ENCODE measurements at regions of chr12 and their contacts with region 1.

Region 1: DNA sequence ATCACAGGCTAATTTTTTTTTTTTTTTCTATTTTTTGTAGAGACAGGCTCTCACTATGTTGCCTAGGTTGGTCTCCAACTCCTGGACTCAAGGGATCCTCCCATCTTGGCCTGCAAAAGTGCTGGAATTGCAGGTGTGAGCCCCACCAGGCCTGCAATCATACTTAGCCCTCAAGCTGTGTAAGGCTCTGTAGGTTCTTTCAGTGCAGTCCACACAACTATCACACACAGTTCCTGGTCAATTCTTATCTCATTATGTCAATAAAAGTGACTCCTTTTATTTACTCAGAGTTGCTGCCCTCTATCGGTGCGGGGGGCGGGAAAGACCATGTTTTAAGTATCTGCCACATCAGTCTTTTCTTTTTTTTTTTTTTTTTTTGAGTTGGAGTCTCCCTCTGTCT is 29.0 kb downstream of the SLC2A3 start:
- DNase-seq: peak; percentile 90 to 93
- ATAC-seq: peak; percentile 97 to 99
- H3K4me3 ChIP-seq: no peak overlapping the region
- H3K27ac ChIP-seq: peak overlapping the region; percentile 76 to 81
- H3K4me1 ChIP-seq: peaks cover 36% of the 10 kb centered on the region
- CTCF ChIP-seq: peak; percentile 53
- EP300 ChIP-seq: no peak
- POLR2A ChIP-seq: no peak
- RAD21 ChIP-seq: peak; percentile 59 to 60; a peak in 4 of 5 replicates

Region 2: GRCh38 chr12:7859552-7859951 is 47.5 kb before region 1 on chr12:
- CTCF ChIA-PET with region 1: interaction called, 12 read pairs
- POLR2A ChIA-PET with region 1: no interaction called
- DNase-seq: no peak
- ATAC-seq: peak in 1 of 2 experiments; percentile 17; a peak in 3 of 6 replicates
- H3K4me3 ChIP-seq: no peak overlapping the region
- H3K27ac ChIP-seq: peak overlapping the region in 1 of 2 experiments; percentile 86; a peak in 2 of 6 replicates
- H3K4me1 ChIP-seq: peaks cover 14% of the 10 kb centered on the region
- CTCF ChIP-seq: no peak
- EP300 ChIP-seq: no peak
- POLR2A ChIP-seq: no peak
- RAD21 ChIP-seq: no peak

Region 3: DNA sequence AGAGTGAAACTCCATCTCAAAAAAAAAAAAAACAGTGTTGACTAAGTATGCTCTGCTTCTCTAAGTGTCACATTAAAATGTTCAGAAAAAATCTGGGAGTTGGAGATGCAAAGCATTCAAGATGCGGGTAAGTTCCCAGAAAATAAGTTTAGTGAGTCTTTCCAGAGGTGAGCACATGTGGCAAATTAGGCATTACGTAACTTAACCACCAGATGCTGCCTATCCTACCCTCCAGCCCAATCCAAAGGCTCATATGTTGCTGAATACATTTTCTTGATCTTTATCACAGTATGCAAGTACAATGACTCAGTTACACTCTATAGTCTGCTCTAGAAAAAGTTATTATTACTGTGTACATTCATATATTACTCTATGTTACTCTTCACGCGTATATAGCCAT is 37.9 kb before region 1 on chr12:
- CTCF ChIA-PET with region 1: interaction called, 15 read pairs
- POLR2A ChIA-PET with region 1: no interaction called
- DNase-seq: no peak
- ATAC-seq: no peak
- H3K4me3 ChIP-seq: no peak overlapping the region
- H3K27ac ChIP-seq: no peak overlapping the region
- H3K4me1 ChIP-seq: peaks cover 10% of the 10 kb centered on the region
- CTCF ChIP-seq: no peak
- EP300 ChIP-seq: no peak
- POLR2A ChIP-seq: no peak
- RAD21 ChIP-seq: no peak

Region 4: GRCh38 chr12:7923241-7924236 is 16.5 kb after region 1 on chr12:
- CTCF ChIA-PET with region 1: interaction called, 13 read pairs
- POLR2A ChIA-PET with region 1: no interaction called
- DNase-seq: no peak
- ATAC-seq: no peak
- H3K4me3 ChIP-seq: no peak overlapping the region
- H3K27ac ChIP-seq: no peak overlapping the region
- H3K4me1 ChIP-seq: no peaks in the 10 kb centered on the region
- CTCF ChIP-seq: no peak
- EP300 ChIP-seq: no peak
- POLR2A ChIP-seq: no peak
- RAD21 ChIP-seq: no peak

Region 5: DNA sequence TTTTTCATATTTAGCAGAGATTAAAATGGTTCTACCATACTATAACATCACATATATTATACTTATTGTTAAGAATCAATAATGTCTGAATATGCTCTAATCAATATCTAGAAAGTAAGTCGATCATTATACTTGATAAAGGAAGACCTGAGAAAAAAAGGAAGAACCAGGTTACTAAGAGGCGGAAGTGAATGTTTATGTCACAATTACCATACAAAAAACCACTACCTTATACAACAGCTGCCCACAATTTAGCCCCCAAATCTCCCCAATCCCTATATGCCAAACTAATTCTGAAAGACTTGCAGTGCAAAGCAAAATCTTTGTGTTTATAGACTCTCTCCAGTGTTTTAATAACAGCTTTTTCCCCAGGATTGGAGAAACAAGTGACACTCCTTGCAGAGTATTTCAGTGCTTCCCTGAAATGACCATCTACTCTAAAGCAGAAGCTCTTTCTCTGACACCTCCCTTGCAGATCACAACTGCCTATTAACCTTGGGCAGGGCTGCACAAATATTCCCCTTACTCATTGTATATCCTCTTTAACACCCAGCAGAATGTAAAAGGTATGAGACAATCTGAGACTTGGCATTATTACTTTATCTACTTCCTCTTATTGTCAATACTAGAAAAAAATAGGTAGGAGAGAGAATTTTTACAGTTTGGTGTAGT is 41.7 kb after region 1 on chr12:
- CTCF ChIA-PET with region 1: no interaction called
- POLR2A ChIA-PET with region 1: no interaction called
- DNase-seq: peak in 1 of 2 experiments; percentile 29
- ATAC-seq: peak; percentile 30 to 59; a peak in 2 of 6 replicates
- H3K4me3 ChIP-seq: no peak overlapping the region
- H3K27ac ChIP-seq: peak overlapping the region in 1 of 2 experiments; percentile 33; a peak in 1 of 6 replicates
- H3K4me1 ChIP-seq: 0 out of 3 replicates have a peak, but pooled peaks cover 9% of the 10 kb centered on the region
- CTCF ChIP-seq: no peak
- EP300 ChIP-seq: no peak
- POLR2A ChIP-seq: no peak
- RAD21 ChIP-seq: no peak

Measured in A549 (cell line).